ENCODE measurements at regions of chr3 and their contacts with region 1.

Region 1: GRCh38 chr3:46214751-46215352 is 6.7 kb upstream of the CCR1 start:
- DNase-seq: peak; percentile 36 to 62
- H3K4me3 ChIP-seq: no peak overlapping the region
- H3K27ac ChIP-seq: no peak overlapping the region
- H3K4me1 ChIP-seq: peaks cover 10% of the 10 kb centered on the region; the same call in 1 of the 2 replicates
- H3K27me3 ChIP-seq: no peaks in the 10 kb centered on the region
- CTCF ChIP-seq: peak; percentile 45

Region 2: DNA sequence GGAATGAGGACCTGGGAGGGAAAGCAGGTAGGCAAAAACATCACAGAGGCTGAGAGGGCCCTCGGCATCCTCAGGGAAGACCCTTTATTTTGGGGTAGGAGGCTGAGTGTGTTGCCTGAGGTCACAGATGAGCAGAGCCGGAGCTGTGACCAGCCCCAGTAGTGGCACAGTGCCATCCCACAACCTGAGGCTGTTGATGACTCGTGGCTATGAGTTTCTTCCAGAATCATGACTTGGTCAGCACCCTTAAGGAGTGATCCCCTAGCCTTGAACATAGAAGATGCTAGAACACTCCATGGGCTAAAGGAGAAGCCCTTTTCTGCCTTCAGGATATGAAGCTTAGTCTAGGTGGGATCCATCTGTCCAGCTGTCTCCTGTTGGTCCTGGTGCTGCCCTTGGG is 291.1 kb before region 1 on chr3:
- CTCF ChIA-PET with region 1: no interaction called
- POLR2A ChIA-PET with region 1: no interaction called
- intact Hi-C with region 1: no loop called
- DNase-seq: peak in 1 of 2 experiments; percentile 49
- H3K4me3 ChIP-seq: no peak overlapping the region
- H3K27ac ChIP-seq: no peak overlapping the region
- H3K4me1 ChIP-seq: no peaks in the 10 kb centered on the region
- H3K27me3 ChIP-seq: no peaks in the 10 kb centered on the region
- CTCF ChIP-seq: no peak

Region 3: DNA sequence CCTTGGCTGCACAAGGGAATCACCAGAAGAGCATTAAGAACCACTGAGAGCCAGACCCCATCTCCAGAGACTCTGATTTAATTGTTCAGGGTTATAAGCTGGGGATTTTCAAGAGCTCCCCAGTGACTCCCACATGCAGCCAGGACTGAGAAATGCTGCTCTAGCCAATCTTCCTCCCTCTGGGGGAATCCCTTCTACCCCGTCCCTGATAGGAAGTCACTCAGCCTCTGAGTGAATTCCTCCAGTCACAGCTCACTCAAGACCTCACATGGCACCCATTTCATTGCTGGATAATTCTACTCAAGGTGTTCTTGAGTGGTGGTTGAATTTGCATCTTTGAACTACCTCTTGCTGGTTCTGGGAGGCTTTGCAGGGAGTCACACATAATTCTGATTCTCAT is 38.1 kb after region 1 on chr3:
- CTCF ChIA-PET with region 1: no interaction called
- POLR2A ChIA-PET with region 1: no interaction called
- intact Hi-C with region 1: no loop called
- DNase-seq: no peak
- H3K4me3 ChIP-seq: no peak overlapping the region
- H3K27ac ChIP-seq: no peak overlapping the region
- H3K4me1 ChIP-seq: no peaks in the 10 kb centered on the region
- H3K27me3 ChIP-seq: no peaks in the 10 kb centered on the region
- CTCF ChIP-seq: no peak

Region 4: GRCh38 chr3:46372492-46373359 is 157.9 kb after region 1 on chr3:
- CTCF ChIA-PET with region 1: interaction called, 3 read pairs
- POLR2A ChIA-PET with region 1: no interaction called
- intact Hi-C with region 1: loop called (anchors 1 kb)
- DNase-seq: no peak
- H3K4me3 ChIP-seq: no peak overlapping the region
- H3K27ac ChIP-seq: no peak overlapping the region
- H3K4me1 ChIP-seq: peaks cover 19% of the 10 kb centered on the region
- H3K27me3 ChIP-seq: no peaks in the 10 kb centered on the region
- CTCF ChIP-seq: peak; percentile 76

Measured in PC-9 (cell line).